Thyroid gland (tissue), 4 donors: ENCODE measurements at regions of chr1 and their contacts with region 1.

Region 1: GRCh38 chr1:225777583-225778336 is at the start of gene SRP9:
- DNase-seq: peak; percentile 99 to 100
- H3K4me3 ChIP-seq: peak within 1 kb of the TSS; percentile 4 to 52 (median 27)
- H3K27ac ChIP-seq: peak within 1 kb of the TSS; percentile 73 to 97 (median 91)
- H3K4me1 ChIP-seq: peaks cover 26 to 27% of the 10 kb centered on the region in 2 donors
- H3K27me3 ChIP-seq: no peaks in the 10 kb centered on the region
- CTCF ChIP-seq: peak; percentile 68 to 94 (median 88)
- POLR2A ChIP-seq: peak in 1 of 2 donors; percentile 87
- total RNA-seq, gene SRP9: 196 to 297 (median 260) TPM

Region 2: DNA sequence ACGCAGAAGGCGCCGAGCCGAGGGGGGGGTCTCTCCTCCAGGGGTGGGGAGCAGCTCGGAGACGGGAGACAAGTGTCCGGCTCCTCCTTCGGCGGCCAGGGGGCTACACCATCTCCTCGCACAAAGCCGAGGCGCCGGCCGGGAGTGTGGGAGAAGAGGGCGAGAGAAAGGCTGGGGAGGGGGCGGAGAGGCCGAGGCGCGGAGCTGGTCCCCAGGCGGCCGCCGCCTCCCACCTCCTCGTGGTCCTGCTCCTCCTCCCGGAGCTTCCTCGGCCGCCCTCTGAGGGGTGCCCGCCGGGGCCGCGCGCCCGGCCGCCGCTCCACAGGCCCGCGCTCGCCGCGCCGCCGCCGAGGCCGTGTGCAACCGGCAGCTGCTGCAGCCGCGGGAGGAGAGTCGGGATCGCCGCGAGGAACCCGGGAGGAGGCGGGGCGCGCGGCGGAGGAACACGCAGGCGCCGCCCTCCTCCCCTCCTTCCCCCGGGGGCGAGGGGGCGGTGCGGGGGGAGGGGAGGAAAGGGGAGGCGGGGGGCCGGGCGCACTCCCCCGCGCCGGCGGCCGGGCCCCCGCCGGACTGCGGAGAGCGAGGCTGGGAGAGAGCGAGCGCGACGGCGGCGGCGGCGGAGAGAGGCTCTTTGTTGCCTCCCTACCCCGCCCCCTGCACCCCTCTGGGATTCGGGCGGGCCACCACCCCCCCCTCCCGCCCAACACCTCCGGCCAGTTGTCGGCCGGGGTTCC is 124.9 kb before region 1 on chr1 and contains the start of gene ENAH:
- intact Hi-C with region 1: loop called (anchors 10 kb)
- DNase-seq: peak; percentile 82
- H3K4me3 ChIP-seq: peak within 1 kb of the TSS; percentile 86 to 99 (median 99)
- H3K27ac ChIP-seq: peak within 1 kb of the TSS; percentile 93 to 96 (median 95)
- H3K4me1 ChIP-seq: no peaks in the 10 kb centered on the region
- H3K27me3 ChIP-seq: no peaks in the 10 kb centered on the region
- CTCF ChIP-seq: no peak
- POLR2A ChIP-seq: peak; percentile 40 to 89
- total RNA-seq, gene ENAH: 24.5 to 31.4 (median 28.5) TPM

Region 3: GRCh38 chr1:225845571-225846259 is 68.0 kb after region 1 on chr1:
- intact Hi-C with region 1: loop called (anchors 10 kb)
- DNase-seq: peak; percentile 74
- H3K4me3 ChIP-seq: no peak overlapping the region
- H3K27ac ChIP-seq: no peak overlapping the region
- H3K4me1 ChIP-seq: no peaks in the 10 kb centered on the region
- H3K27me3 ChIP-seq: no peaks in the 10 kb centered on the region
- CTCF ChIP-seq: peak in 4 of 6 experiments; percentile 53 to 64 (median 60)
- POLR2A ChIP-seq: no peak

Region 4: DNA sequence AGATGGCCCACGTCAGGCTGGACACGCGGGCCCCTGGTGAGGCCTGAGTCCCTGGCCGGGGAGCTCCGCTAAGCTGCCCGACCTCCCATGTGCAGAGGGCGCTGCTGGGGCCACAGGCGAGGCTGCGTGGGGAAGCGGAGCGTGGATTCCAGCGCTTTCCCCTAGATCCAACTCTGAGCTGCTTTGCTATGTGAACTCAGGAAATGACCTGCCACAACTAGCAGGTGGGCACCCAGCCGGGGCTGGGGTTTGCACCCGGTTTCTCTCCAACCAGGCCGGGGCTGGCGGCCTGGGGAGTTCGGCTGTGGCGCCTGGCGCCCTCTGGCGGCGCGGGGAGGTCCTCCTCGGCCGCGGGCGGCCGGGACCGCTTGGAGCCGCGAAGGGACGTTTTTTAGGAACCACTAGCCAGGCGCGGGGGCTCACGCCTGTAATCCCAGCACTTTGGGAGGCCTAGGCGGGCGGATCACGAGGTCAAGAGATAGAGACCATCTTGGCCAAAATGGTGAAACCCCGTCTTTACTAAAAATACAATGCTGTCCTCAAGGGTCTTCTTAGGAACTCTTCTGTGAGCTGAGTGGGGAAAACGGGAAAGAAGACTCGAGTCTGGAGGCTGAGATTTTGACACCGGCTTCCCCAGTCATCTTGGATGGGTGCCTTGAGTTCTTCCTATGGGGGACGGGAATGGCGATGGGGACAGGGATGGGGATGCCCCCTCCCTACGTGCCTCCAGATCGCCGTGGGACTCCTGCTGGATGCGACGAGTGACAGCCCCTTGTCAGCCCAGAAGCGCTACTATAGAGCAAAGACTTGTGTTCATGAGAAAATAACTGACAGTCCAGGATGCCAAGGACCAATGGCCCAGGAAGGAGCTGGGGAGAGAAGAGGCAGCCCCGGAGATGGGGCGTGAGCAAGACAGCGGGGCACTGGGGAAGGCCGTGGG is 133.7 kb after region 1 on chr1:
- intact Hi-C with region 1: loop called (anchors 2 kb)
- DNase-seq: peak; percentile 54 to 62
- H3K4me3 ChIP-seq: no peak overlapping the region
- H3K27ac ChIP-seq: no peak overlapping the region
- H3K4me1 ChIP-seq: peaks cover 0 to 8% of the 10 kb centered on the region in 2 donors
- H3K27me3 ChIP-seq: no peaks in the 10 kb centered on the region
- CTCF ChIP-seq: peak; percentile 60 to 95 (median 78)
- POLR2A ChIP-seq: no peak

Region 5: GRCh38 chr1:225999227-225999911 is 221.6 kb after region 1 on chr1 and contains the start of gene SDE2:
- intact Hi-C with region 1: loop called (anchors 10 kb)
- DNase-seq: peak; percentile 99
- H3K4me3 ChIP-seq: peak within 1 kb of the TSS; percentile 55 to 73 (median 67)
- H3K27ac ChIP-seq: peak within 1 kb of the TSS; percentile 94 to 98 (median 96)
- H3K4me1 ChIP-seq: peaks cover 18 to 26% of the 10 kb centered on the region in 2 donors
- H3K27me3 ChIP-seq: no peaks in the 10 kb centered on the region
- CTCF ChIP-seq: no peak
- POLR2A ChIP-seq: peak; percentile 79 to 98
- total RNA-seq, gene SDE2: 19.9 to 41.0 (median 27.3) TPM